ENCODE measurements at regions of chr9 and their contacts with region 1.

Region 1: DNA sequence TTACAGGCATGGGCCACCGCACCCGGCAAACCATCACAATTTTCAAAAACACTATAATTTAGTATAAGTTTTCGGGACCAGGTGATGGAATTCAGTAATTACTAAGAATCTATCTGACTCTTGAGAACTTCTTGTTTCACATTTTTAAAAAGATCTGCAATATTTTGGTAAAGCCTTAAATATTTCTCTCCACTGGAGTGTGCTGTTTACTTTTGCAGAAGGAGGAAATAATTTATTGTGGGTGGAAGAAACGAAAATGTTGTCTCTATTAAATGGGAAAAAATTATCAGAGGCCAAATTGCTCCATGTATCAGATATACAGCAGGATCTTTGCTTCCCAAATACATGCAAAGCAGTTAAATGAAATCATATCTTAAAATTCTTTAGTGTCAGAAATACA is 566.8 kb upstream of the CYLC2 start:
- DNase-seq: no peak
- ATAC-seq: no peak
- H3K4me3 ChIP-seq: no peak overlapping the region
- H3K27ac ChIP-seq: no peak overlapping the region
- H3K4me1 ChIP-seq: no peaks in the 10 kb centered on the region
- H3K27me3 ChIP-seq: no peaks in the 10 kb centered on the region
- CTCF ChIP-seq: no peak
- EP300 ChIP-seq: no peak
- POLR2A ChIP-seq: no peak
- RAD21 ChIP-seq: peak; percentile 73

Region 2: DNA sequence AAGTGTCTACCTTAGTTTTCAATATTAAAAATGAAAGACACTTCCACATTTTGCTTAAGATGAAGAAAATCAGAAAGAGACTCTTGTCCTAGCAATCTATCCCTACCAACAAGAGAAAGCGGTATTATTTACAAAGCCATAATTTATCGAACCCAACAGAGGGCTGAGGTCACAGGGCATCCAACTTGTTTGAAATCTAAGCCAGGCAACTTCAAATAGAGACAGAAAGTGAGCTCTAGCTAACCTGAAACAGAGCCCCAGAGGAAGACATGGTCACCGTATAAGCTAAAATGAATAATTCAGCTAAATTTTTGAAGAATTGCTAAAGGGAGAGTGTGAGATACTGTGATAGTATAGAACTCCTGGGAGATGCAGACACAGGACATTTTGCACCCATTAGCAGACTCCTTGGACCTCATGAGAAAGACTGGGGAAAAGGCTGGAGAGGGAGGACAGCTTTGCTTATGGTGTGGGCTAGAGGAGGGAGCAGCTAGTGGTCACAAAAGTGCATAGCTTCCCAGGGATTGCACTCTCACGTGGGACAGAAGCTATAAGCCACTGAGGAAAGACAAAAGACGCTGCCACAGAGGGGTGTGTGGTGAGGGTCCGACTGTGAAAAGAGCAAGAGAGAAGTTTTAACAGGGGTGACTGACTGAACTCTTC is 65.7 kb before region 1 on chr9:
- CTCF ChIA-PET with region 1: no interaction called
- POLR2A ChIA-PET with region 1: no interaction called
- RAD21 ChIA-PET with region 1: no interaction called
- SMC1A ChIA-PET with region 1: no interaction called
- in situ Hi-C with region 1: no loop called
- intact Hi-C with region 1: loop called (anchors 10 kb)
- DNase-seq: no peak
- ATAC-seq: no peak
- H3K4me3 ChIP-seq: no peak overlapping the region
- H3K27ac ChIP-seq: no peak overlapping the region
- H3K4me1 ChIP-seq: no peaks in the 10 kb centered on the region
- H3K27me3 ChIP-seq: no peaks in the 10 kb centered on the region
- CTCF ChIP-seq: no peak
- EP300 ChIP-seq: no peak
- POLR2A ChIP-seq: no peak
- RAD21 ChIP-seq: no peak

Measured in GM12878 (cell line).